ENCODE measurements at regions of chr1 and their contacts with region 1.

Region 1: DNA sequence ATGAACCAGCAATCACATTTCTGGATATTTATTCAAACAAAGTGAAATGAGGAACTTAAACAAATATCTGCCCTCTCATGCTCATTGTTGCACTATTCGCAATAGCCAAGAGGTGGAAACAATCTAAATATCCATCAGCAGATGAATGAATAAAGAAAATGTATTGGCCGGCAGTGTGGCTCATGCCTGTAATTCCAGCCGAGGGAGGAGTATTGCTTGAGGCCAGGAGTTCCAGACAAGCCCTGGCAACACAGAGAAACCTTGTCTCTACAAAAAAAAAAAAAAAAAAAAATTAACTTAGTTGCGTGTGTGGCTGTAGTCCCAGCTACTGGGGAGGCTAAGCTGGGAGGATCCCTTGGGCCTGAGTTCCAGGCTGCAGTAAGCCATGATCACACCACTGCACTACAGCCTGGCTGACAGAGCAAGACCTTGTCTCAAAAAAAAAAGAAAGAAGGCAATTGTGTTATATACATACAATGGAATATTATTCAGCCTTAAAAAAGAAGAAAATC is 191.4 kb downstream of the AKT3 start:
- DNase-seq: no peak
- ATAC-seq: no peak
- H3K4me3 ChIP-seq: no peak overlapping the region
- H3K4me3 Mint-ChIP-seq: no peak overlapping the region
- H3K27ac ChIP-seq: no peak overlapping the region
- H3K27ac Mint-ChIP-seq: no peak overlapping the region
- H3K4me1 ChIP-seq: no peaks in the 10 kb centered on the region
- H3K4me1 Mint-ChIP-seq: peaks cover 5% of the 10 kb centered on the region
- H3K27me3 ChIP-seq: no peaks in the 10 kb centered on the region
- H3K27me3 Mint-ChIP-seq: no peaks in the 10 kb centered on the region
- CTCF ChIP-seq: no peak

Region 2: DNA sequence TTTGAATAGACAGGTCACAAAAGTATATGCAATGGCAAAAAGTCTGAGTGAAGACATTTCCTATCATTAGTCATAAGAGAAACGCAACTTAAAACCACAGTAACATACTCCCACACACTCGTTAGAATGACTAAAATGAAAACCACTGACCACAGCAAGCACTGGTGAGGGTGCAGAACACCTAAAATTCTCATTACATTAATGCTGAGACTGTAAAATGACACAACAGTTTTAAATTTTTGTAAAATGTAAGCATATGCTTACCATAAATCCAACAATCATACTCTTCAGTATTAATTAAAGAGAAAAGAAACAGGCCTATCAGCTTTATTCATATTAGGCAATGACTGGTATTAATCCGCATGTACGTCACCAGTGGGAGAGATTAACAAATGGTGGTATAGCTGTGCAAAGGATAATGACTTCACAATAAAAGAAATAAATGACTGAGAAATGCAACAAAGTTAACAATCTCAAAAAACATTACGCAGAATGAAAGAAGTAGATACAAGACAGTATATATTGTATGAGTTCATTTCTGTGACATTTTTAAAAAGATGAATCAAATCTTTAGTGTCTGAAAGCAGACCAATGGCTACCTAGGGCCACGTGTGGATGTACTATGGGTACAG is 62.1 kb before region 1 on chr1:
- CTCF ChIA-PET with region 1: no interaction called
- POLR2A ChIA-PET with region 1: no interaction called
- intact Hi-C with region 1: loop called in 1 of 2 experiments (anchors 10 kb)
- DNase-seq: peak in 3 of 9 experiments; percentile 33 to 79 (median 69)
- ATAC-seq: peak; percentile 67
- H3K4me3 ChIP-seq: no peak overlapping the region
- H3K4me3 Mint-ChIP-seq: peak overlapping the region; percentile 30
- H3K27ac ChIP-seq: peak overlapping the region in 1 of 2 experiments; percentile 64
- H3K27ac Mint-ChIP-seq: peak overlapping the region; percentile 84
- H3K4me1 ChIP-seq: peaks cover 13% of the 10 kb centered on the region
- H3K4me1 Mint-ChIP-seq: peaks cover 39% of the 10 kb centered on the region
- H3K27me3 ChIP-seq: no peaks in the 10 kb centered on the region
- H3K27me3 Mint-ChIP-seq: no peaks in the 10 kb centered on the region
- CTCF ChIP-seq: no peak

Region 3: DNA sequence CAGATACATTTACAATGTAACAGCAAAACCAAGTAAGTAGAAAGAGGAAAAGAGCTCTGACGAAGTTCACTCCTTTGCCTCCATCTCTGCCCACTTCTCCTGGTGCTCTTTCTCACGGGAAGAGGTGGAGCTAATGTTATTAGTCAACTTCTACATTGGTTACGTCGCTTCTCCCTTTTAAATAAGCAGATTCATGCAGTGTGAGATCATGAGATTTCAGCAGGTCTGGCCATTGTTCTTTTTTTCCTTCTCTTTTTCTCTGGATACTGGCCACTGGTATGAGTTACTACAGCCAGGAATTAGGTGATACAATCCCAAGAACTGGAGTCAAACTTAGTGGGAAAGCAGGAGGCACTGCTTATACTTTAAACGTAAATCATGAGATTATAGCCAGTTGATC is 15.7 kb before region 1 on chr1:
- CTCF ChIA-PET with region 1: no interaction called
- POLR2A ChIA-PET with region 1: no interaction called
- intact Hi-C with region 1: no loop called
- DNase-seq: no peak
- ATAC-seq: no peak
- H3K4me3 ChIP-seq: no peak overlapping the region
- H3K4me3 Mint-ChIP-seq: no peak overlapping the region
- H3K27ac ChIP-seq: no peak overlapping the region
- H3K27ac Mint-ChIP-seq: no peak overlapping the region
- H3K4me1 ChIP-seq: no peaks in the 10 kb centered on the region
- H3K4me1 Mint-ChIP-seq: peaks cover 3% of the 10 kb centered on the region
- H3K27me3 ChIP-seq: no peaks in the 10 kb centered on the region
- H3K27me3 Mint-ChIP-seq: no peaks in the 10 kb centered on the region
- CTCF ChIP-seq: no peak